ENCODE measurements at regions of chr5 and their contacts with region 1.

Region 1: DNA sequence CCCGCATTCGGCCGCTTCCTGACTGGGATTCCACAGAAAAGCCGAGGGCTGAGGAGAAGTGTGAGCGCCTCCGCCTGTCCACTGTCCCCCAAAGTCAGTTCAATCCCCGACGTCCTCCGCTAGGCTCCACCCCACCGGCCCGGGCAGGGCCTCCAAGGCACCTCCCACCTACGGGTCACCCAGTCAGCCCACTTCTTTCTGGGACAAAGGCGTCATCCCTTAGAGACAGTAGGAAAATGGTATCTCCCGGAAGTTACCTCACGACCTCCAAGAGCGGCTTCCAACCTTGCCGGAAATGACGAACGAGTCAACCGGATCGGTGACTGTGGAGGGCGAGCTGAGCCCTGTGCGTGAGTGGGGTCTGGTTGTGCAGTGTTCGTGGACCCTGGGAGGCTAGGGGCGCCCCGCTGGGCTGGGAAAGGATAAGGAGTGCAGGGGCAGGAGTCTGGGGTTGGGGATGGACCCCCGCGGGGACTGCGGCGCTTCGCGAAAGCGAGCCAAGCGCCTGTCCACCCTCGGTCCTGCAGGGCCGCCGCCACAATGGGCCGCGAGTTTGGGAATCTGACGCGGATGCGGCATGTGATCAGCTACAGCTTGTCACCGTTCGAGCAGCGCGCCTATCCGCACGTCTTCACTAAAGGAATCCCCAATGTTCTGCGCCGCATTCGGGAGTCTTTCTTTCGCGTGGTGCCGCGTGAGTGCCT is at the starts of genes GDF9 and UQCRQ:
- DNase-seq: peak; percentile 96
- H3K4me3 Mint-ChIP-seq: peak within 1 kb of the TSS; percentile 99
- H3K27ac Mint-ChIP-seq: peak within 1 kb of the TSS; percentile 97
- H3K4me1 Mint-ChIP-seq: peaks cover 27% of the 10 kb centered on the region
- H3K27me3 Mint-ChIP-seq: no peaks in the 10 kb centered on the region
- total RNA-seq, gene GDF9: 0.64 to 1.2 TPM
- total RNA-seq, gene UQCRQ: 677 to 784 TPM

Region 2: GRCh38 chr5:132556763-132557477 is 309.6 kb before region 1 on chr5 and contains the start of gene RAD50:
- CTCF ChIA-PET with region 1: interaction called, 3 read pairs
- intact Hi-C with region 1: loop called (anchors 1 kb)
- DNase-seq: peak; percentile 96
- H3K4me3 Mint-ChIP-seq: peak within 1 kb of the TSS; percentile 98
- H3K27ac Mint-ChIP-seq: peak within 1 kb of the TSS; percentile 94
- H3K4me1 Mint-ChIP-seq: peaks cover 15% of the 10 kb centered on the region
- H3K27me3 Mint-ChIP-seq: no peaks in the 10 kb centered on the region
- total RNA-seq, gene RAD50: 39.1 to 42.4 TPM

Region 3: GRCh38 chr5:132829742-132830435 is 36.6 kb before region 1 on chr5:
- CTCF ChIA-PET with region 1: interaction called, 5 read pairs
- intact Hi-C with region 1: loop called (anchors 1 kb)
- DNase-seq: peak; percentile 79
- H3K4me3 Mint-ChIP-seq: peak overlapping the region; percentile 79
- H3K27ac Mint-ChIP-seq: no peak overlapping the region
- H3K4me1 Mint-ChIP-seq: peaks cover 4% of the 10 kb centered on the region
- H3K27me3 Mint-ChIP-seq: peaks cover 50% of the 10 kb centered on the region

Region 4: GRCh38 chr5:132963175-132964104 is 96.9 kb after region 1 on chr5 and contains the start of gene AFF4:
- CTCF ChIA-PET with region 1: no interaction called
- intact Hi-C with region 1: loop called (anchors 1 kb)
- DNase-seq: peak; percentile 86
- H3K4me3 Mint-ChIP-seq: peak within 1 kb of the TSS; percentile 95
- H3K27ac Mint-ChIP-seq: peak within 1 kb of the TSS; percentile 97
- H3K4me1 Mint-ChIP-seq: peaks cover 33% of the 10 kb centered on the region
- H3K27me3 Mint-ChIP-seq: no peaks in the 10 kb centered on the region
- total RNA-seq, gene AFF4: 13.6 to 14.2 TPM

Region 5: GRCh38 chr5:132988124-132988408 is 121.6 kb after region 1 on chr5:
- CTCF ChIA-PET with region 1: no interaction called
- intact Hi-C with region 1: no loop called
- DNase-seq: no peak
- H3K4me3 Mint-ChIP-seq: no peak overlapping the region
- H3K27ac Mint-ChIP-seq: no peak overlapping the region
- H3K4me1 Mint-ChIP-seq: no peaks in the 10 kb centered on the region
- H3K27me3 Mint-ChIP-seq: no peaks in the 10 kb centered on the region

Region 6: DNA sequence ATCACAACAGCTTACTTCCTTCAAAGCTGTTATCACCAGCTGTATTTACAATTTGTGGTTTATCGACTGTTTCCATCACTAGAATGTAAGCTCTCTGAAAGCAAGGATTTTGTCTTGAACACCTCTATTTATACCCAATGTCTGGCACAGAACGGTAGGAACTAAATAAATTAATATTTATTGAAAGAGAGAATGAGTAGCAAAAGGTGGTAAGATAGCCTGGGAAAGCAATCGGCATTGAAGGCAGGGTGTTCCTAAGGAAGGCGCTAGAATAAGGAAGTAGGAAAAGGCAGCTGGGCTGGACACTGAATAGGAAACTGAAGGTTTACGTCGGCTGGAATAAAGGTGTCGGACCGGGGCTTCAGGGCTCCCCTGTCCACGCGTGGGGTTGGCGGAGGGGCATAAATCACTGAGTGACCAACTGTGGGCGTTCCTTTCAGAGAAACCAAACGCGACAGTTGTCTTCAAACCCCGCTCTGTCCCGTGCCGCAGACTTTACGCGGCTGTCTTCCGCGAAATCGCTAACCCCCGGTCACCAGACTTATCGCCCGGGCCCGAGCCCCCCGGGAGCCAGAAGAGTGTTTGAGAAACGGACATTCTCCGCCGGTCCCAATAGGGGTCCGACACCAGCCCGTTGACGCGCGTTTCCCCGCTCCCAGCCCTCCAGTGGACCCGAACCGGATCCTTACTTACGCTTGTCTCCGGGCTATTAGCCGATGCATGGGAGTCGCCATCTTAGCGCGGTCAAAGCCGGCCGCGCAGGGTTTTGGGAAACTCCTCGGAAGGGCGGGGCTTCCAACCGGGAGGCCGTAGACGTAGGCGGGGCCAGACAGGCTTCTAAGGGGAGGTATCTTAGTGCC is 159.5 kb after region 1 on chr5 and contains the start of gene ZCCHC10:
- CTCF ChIA-PET with region 1: no interaction called
- intact Hi-C with region 1: loop called (anchors 1 kb)
- DNase-seq: peak; percentile 96
- H3K4me3 Mint-ChIP-seq: peak within 1 kb of the TSS; percentile 87
- H3K27ac Mint-ChIP-seq: peak within 1 kb of the TSS; percentile 87
- H3K4me1 Mint-ChIP-seq: peaks cover 18% of the 10 kb centered on the region
- H3K27me3 Mint-ChIP-seq: no peaks in the 10 kb centered on the region
- total RNA-seq, gene ZCCHC10: 23.5 to 27.0 TPM

Measured in activated naive CD4-positive, alpha-beta T cell treated with anti-CD3 and anti-CD28 coated beads for 36 hours (primary cell).